Spleen (tissue), 13 donors: ENCODE measurements at regions of chr17 and their contacts with region 1.

Region 1: GRCh38 chr17:47802341-47803022 is 19.1 kb downstream of the OSBPL7 start:
- DNase-seq: no peak
- H3K4me3 ChIP-seq: no peak overlapping the region
- H3K27ac ChIP-seq: no peak overlapping the region
- H3K4me1 ChIP-seq: no peaks in the 10 kb centered on the region
- H3K27me3 ChIP-seq: no peaks in the 10 kb centered on the region
- CTCF ChIP-seq: peak in 10 of 11 experiments; percentile 4 to 72 (median 54)
- POLR2A ChIP-seq: no peak

Region 2: DNA sequence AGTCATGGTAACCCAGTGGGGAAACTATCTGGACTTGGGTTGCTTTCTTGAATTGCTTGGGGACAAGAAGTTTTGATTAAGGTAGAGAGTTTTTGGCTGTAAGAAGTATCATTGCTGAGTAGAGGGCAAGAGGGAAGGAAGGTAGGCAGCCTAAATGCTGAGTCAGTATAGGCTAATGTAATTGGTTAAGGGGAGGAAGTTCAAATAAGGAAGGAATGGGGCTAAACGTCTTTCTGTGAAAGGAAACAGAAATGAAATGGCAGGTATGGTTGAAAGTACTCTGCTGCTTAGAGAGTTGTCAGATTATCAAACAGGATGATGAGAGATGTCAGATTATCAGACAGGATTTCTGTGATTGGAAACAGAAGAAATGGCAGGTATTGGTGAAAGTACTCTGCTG is 132.4 kb before region 1 on chr17:
- intact Hi-C with region 1: loop called (anchors 10 kb)
- DNase-seq: no peak
- H3K4me3 ChIP-seq: peak overlapping the region in 1 of 8 donors; percentile 32
- H3K27ac ChIP-seq: peak overlapping the region in 7 of 8 donors; percentile 49 to 90 (median 83)
- H3K4me1 ChIP-seq: peaks cover 0 to 88% (median 27%) of the 10 kb centered on the region in 6 donors
- H3K27me3 ChIP-seq: no peaks in the 10 kb centered on the region
- CTCF ChIP-seq: no peak
- POLR2A ChIP-seq: no peak